GM23248 (cell line): ENCODE measurements at regions of chr11 and their contacts with region 1.

Region 1: GRCh38 chr11:111574373-111575225 is 27.6 kb upstream of the SIK2 start:
- DNase-seq: no peak
- H3K4me3 ChIP-seq: peak overlapping the region; percentile 55
- H3K27ac ChIP-seq: no peak overlapping the region
- H3K4me1 ChIP-seq: peaks cover 39% of the 10 kb centered on the region
- H3K27me3 ChIP-seq: no peaks in the 10 kb centered on the region

Region 2: DNA sequence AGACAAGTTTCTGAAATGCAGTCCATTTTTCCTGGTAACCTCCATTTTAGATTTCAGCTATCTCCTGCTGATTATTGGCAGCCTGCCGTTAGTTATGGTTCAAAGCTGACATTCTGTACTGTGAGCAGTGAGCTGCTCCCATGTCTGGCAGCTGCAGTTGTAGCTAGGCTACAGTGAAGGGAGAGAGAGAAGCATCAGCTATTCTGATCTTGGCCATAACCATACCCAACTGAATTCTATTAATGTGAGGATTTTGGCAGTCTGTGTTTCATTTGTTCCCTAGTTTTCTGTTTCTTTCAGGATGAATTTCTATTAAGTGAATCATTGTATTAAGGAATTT is 61.1 kb after region 1 on chr11:
- in situ Hi-C with region 1: loop called (anchors 10 kb)
- DNase-seq: peak; percentile 49
- H3K4me3 ChIP-seq: peak overlapping the region; percentile 18; the same call in 1 of the 2 replicates
- H3K27ac ChIP-seq: peak overlapping the region; percentile 50
- H3K4me1 ChIP-seq: peaks cover 70% of the 10 kb centered on the region
- H3K27me3 ChIP-seq: no peaks in the 10 kb centered on the region

Region 3: GRCh38 chr11:112128483-112129121 is 554.0 kb after region 1 on chr11:
- in situ Hi-C with region 1: no loop called
- DNase-seq: peak; percentile 92
- H3K4me3 ChIP-seq: no peak overlapping the region
- H3K27ac ChIP-seq: no peak overlapping the region
- H3K4me1 ChIP-seq: peaks cover 10% of the 10 kb centered on the region
- H3K27me3 ChIP-seq: no peaks in the 10 kb centered on the region